Activated CD4-positive, alpha-beta T cell treated with anti-CD3 and anti-CD28 coated beads for 36 hours (primary cell): ENCODE measurements at regions of chr5 and their contacts with region 1.

Region 1: GRCh38 chr5:82356808-82357671 is 78.9 kb upstream of the RPS23 start:
- DNase-seq: peak; percentile 86
- ATAC-seq: peak; percentile 82
- H3K4me3 Mint-ChIP-seq: peak overlapping the region; percentile 60
- H3K27ac Mint-ChIP-seq: peak overlapping the region; percentile 95
- H3K4me1 Mint-ChIP-seq: peaks cover 47% of the 10 kb centered on the region
- H3K27me3 Mint-ChIP-seq: no peaks in the 10 kb centered on the region

Region 2: GRCh38 chr5:80874162-80874561 is 1482.9 kb before region 1 on chr5:
- CTCF ChIA-PET with region 1: no interaction called
- POLR2A ChIA-PET with region 1: no interaction called
- intact Hi-C with region 1: no loop called
- DNase-seq: no peak
- ATAC-seq: no peak
- H3K4me3 Mint-ChIP-seq: no peak overlapping the region
- H3K27ac Mint-ChIP-seq: no peak overlapping the region
- H3K4me1 Mint-ChIP-seq: peaks cover 12% of the 10 kb centered on the region
- H3K27me3 Mint-ChIP-seq: no peaks in the 10 kb centered on the region

Region 3: GRCh38 chr5:82278095-82278918 is 78.7 kb before region 1 on chr5 and contains the start of gene RPS23:
- CTCF ChIA-PET with region 1: no interaction called
- POLR2A ChIA-PET with region 1: no interaction called
- intact Hi-C with region 1: loop called in 1 of 2 experiments (anchors 2 kb)
- DNase-seq: peak; percentile 93
- ATAC-seq: peak; percentile 95
- H3K4me3 Mint-ChIP-seq: peak within 1 kb of the TSS; percentile 86
- H3K27ac Mint-ChIP-seq: peak within 1 kb of the TSS; percentile 99
- H3K4me1 Mint-ChIP-seq: peaks cover 46% of the 10 kb centered on the region
- H3K27me3 Mint-ChIP-seq: no peaks in the 10 kb centered on the region
- total RNA-seq, gene RPS23: 2,831 to 3,226 TPM

Region 4: GRCh38 chr5:82388181-82388580 is 31.1 kb after region 1 on chr5:
- CTCF ChIA-PET with region 1: no interaction called
- POLR2A ChIA-PET with region 1: no interaction called
- intact Hi-C with region 1: loop called in 1 of 2 experiments (anchors 2 kb)
- DNase-seq: no peak
- ATAC-seq: no peak
- H3K4me3 Mint-ChIP-seq: no peak overlapping the region
- H3K27ac Mint-ChIP-seq: no peak overlapping the region
- H3K4me1 Mint-ChIP-seq: peaks cover 11% of the 10 kb centered on the region
- H3K27me3 Mint-ChIP-seq: peaks cover 7% of the 10 kb centered on the region

Region 5: GRCh38 chr5:82406205-82406773 is 49.2 kb after region 1 on chr5:
- CTCF ChIA-PET with region 1: no interaction called
- POLR2A ChIA-PET with region 1: no interaction called
- intact Hi-C with region 1: no loop called
- DNase-seq: no peak
- ATAC-seq: no peak
- H3K4me3 Mint-ChIP-seq: no peak overlapping the region
- H3K27ac Mint-ChIP-seq: no peak overlapping the region
- H3K4me1 Mint-ChIP-seq: no peaks in the 10 kb centered on the region
- H3K27me3 Mint-ChIP-seq: no peaks in the 10 kb centered on the region

Region 6: GRCh38 chr5:82476155-82476554 is 119.1 kb after region 1 on chr5:
- CTCF ChIA-PET with region 1: no interaction called
- POLR2A ChIA-PET with region 1: no interaction called
- intact Hi-C with region 1: no loop called
- DNase-seq: no peak
- ATAC-seq: no peak
- H3K4me3 Mint-ChIP-seq: no peak overlapping the region
- H3K27ac Mint-ChIP-seq: no peak overlapping the region
- H3K4me1 Mint-ChIP-seq: no peaks in the 10 kb centered on the region
- H3K27me3 Mint-ChIP-seq: peaks cover 10% of the 10 kb centered on the region

Region 7: DNA sequence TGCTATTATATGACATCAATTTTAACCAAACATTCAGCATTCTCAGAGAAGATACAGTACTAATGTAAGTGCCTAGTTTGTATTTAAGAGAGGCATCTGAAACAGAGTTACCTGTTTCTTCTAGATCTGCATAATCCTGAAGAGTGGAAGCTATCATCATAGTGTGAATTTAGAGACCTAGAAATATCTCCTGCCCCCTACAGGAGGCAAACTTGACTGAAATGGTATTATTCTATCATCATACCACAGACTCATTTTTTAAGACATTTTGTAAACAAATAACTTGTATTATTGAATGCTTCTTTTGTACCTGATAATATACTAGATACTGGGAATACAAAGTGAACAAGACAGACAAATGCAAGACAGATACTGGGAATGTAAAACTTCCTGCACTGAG is 137.9 kb after region 1 on chr5:
- CTCF ChIA-PET with region 1: interaction called, 3 read pairs
- POLR2A ChIA-PET with region 1: no interaction called
- intact Hi-C with region 1: loop called (anchors 1 to 10 kb)
- DNase-seq: no peak
- ATAC-seq: no peak
- H3K4me3 Mint-ChIP-seq: no peak overlapping the region
- H3K27ac Mint-ChIP-seq: no peak overlapping the region
- H3K4me1 Mint-ChIP-seq: no peaks in the 10 kb centered on the region
- H3K27me3 Mint-ChIP-seq: no peaks in the 10 kb centered on the region

Region 8: DNA sequence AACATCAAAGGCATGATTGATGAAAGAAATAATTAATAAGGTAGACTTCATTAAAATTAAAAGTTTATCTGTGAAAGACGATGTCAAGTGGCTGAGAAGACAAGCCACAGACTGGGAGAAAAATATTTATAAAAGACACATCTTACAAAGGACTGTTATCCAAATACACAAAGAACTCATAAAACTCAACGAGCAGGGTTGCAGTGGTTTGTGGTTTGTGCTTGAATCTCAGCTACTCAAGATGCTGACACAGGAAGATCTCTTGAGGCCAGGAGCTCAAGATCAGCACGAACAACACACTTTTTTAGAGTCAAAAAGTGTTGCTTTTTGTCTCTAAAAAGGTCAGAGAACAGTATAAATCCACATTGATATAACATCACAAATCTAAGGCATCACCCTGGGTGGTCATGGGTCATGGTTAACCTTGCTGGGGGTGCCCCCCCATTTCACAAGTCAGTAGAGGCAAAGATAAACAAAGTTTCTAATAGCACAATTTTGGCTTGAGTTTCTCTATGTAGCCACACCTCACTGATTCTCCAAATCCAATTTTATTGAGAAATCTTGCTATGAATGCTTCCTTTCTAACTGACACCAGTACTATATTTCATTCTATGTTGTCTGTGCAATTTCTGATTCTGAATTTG is 264.0 kb after region 1 on chr5:
- CTCF ChIA-PET with region 1: no interaction called
- POLR2A ChIA-PET with region 1: no interaction called
- intact Hi-C with region 1: no loop called
- DNase-seq: peak; percentile 10
- ATAC-seq: no peak
- H3K4me3 Mint-ChIP-seq: no peak overlapping the region
- H3K27ac Mint-ChIP-seq: no peak overlapping the region
- H3K4me1 Mint-ChIP-seq: peaks cover 5% of the 10 kb centered on the region
- H3K27me3 Mint-ChIP-seq: no peaks in the 10 kb centered on the region

Region 9: DNA sequence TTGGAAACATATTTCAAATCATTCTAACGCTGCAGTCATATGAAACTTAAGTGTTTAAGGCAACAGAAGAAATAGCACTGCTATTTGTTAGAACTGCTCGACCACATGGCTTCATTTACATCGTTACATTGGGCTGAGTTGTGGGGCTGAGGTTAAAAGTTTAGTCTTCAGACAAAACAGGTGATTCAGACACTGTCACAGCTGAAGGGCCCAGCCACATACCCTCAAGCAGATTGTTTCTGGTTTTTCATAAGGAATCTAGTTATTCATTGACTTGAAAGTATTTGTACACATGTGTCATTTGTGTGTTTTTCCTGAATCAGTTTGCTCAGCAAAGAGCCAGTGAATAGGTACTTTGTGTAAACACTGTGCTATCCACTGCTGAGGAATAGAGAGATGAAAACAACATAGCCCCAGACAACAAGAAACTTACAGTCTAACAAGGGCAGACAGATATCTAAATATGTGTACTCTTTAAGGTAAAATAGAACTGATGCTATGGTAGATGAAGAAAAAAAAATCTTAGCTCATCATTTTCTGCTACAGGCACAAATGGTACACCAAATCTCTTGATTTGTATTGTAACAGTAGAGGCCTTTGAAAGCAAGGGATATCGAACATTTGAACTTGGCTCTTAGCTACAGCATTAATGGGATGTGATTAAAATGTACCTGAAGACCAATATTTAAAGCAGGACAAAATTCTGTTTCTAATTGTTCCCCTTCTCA is 278.7 kb after region 1 on chr5:
- CTCF ChIA-PET with region 1: no interaction called
- POLR2A ChIA-PET with region 1: no interaction called
- intact Hi-C with region 1: loop called (anchors 2 to 5 kb)
- DNase-seq: peak; percentile 41
- ATAC-seq: peak; percentile 96
- H3K4me3 Mint-ChIP-seq: no peak overlapping the region
- H3K27ac Mint-ChIP-seq: no peak overlapping the region
- H3K4me1 Mint-ChIP-seq: peaks cover 6% of the 10 kb centered on the region
- H3K27me3 Mint-ChIP-seq: no peaks in the 10 kb centered on the region

Region 10: DNA sequence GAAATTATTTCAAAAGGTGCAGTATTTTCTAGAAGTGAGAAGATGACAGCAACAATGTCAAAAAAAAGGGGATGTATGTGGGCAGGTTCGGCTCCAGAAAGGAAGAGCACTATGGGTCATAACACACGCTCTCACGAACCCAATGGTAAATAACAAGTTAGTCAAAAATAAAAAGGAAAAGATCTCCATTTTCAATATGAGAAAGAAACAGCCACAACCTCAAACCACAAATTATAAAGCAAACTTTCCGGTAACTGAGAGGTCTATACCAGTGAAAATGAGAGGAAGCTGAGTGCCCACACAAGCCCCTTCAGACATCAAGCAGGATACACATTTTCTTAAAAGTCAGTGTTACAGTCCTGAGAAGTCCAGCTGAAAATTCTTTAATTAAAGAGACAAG is 319.6 kb after region 1 on chr5:
- CTCF ChIA-PET with region 1: no interaction called
- POLR2A ChIA-PET with region 1: no interaction called
- intact Hi-C with region 1: loop called (anchors 1 to 2 kb)
- DNase-seq: peak; percentile 35
- ATAC-seq: peak; percentile 84
- H3K4me3 Mint-ChIP-seq: peak overlapping the region; percentile 31
- H3K27ac Mint-ChIP-seq: peak overlapping the region; percentile 22
- H3K4me1 Mint-ChIP-seq: peaks cover 19% of the 10 kb centered on the region
- H3K27me3 Mint-ChIP-seq: peaks cover 2% of the 10 kb centered on the region

Region 11: DNA sequence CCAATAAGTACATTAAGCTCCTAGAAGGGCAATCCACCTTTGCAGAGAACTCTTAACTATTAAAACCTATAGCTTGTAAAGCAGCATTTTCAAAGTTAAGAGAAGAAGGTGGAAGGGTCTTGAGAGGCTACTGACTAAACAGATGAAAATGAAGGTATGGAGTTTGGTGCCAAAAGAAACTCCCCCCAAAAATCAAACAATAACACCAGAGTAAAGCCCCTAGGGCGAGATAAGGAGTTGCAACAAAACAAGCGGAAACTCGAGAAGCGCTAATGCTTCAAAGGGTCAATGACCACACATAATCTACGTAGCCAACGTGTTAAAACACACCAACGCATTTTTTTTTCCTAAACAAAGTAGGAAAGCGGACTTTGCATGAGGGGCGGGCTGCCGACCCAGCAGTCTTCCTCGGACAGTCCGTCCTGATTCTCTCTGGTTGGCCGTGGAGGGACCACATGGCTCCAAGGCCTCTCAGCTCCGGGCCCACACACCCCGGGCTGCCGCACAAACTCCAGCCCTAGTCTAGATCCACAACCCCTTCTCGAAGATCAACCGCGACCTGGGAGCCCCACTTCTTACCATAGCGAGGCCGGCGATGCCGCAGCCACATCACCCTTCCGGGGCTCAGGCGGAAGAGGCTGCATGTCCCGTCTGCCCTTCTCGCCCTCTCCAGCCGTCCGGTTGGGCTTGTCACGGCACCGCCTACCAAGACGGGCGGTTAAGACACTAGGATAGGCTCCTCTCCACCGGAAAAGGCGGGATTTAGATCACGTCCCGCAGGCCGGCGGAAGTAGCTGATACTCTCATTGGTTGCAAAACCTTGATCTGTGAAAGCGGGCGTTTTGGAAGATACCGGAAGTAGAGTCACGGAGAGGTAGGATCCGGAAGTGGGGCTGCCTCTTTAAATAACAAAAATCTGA is 720.0 kb after region 1 on chr5 and contains the starts of genes TMEM167A and XRCC4:
- CTCF ChIA-PET with region 1: no interaction called
- POLR2A ChIA-PET with region 1: no interaction called
- intact Hi-C with region 1: loop called (anchors 5 kb)
- DNase-seq: peak; percentile 95
- ATAC-seq: peak; percentile 100
- H3K4me3 Mint-ChIP-seq: peak within 1 kb of the TSS; percentile 98
- H3K27ac Mint-ChIP-seq: peak within 1 kb of the TSS; percentile 98
- H3K4me1 Mint-ChIP-seq: peaks cover 51% of the 10 kb centered on the region
- H3K27me3 Mint-ChIP-seq: no peaks in the 10 kb centered on the region
- total RNA-seq, gene TMEM167A: 32.7 to 70.9 TPM
- total RNA-seq, gene XRCC4: 13.7 to 16.9 TPM